ENCODE measurements at regions of chr4 and their contacts with region 1.

Region 1: DNA sequence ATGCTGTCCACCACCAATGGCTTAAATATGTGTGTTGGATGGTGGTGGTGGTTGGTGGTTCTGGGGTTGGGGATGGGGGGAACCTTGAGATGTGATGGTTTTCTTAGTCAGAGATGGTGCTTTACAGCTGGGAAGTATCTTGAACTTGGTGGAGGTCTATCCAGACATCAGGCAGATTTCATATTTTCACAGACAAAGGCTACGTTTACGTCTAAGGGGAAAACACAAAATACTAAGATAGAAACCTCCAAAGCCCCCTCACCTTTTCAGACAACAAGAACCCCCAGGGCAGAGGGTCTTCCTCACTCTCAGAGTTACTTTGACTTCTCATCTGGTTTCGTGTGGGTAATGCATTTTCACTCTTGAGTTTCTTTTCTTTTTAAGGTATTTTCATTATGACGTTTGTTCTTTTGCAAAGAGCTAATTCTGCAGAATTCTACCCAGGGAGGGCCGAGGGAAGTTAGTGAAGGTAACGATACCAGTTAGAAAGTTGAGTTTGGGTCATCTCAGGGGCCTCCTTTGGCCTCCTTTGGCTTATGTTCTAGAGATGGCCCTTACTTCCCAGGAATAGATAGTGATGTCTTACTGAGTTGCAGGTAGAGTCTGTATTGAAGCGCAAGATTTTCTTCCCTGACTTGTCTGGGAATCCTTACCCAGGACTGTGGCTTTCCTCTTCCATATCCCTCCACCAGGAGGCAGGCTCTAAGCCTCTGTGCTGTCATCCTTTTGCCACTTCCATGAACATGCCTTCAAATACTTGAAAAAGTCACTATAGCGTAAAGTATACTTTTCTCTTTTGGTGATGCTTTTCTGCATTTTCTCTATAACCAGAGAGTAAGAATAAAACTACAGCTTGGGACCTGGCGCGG is 31.9 kb downstream of the RHOH start:
- DNase-seq: no peak
- H3K4me3 Mint-ChIP-seq: peak overlapping the region; percentile 64
- H3K27ac Mint-ChIP-seq: peak overlapping the region; percentile 90
- H3K4me1 Mint-ChIP-seq: peaks cover 88% of the 10 kb centered on the region
- H3K27me3 Mint-ChIP-seq: no peaks in the 10 kb centered on the region

Region 2: DNA sequence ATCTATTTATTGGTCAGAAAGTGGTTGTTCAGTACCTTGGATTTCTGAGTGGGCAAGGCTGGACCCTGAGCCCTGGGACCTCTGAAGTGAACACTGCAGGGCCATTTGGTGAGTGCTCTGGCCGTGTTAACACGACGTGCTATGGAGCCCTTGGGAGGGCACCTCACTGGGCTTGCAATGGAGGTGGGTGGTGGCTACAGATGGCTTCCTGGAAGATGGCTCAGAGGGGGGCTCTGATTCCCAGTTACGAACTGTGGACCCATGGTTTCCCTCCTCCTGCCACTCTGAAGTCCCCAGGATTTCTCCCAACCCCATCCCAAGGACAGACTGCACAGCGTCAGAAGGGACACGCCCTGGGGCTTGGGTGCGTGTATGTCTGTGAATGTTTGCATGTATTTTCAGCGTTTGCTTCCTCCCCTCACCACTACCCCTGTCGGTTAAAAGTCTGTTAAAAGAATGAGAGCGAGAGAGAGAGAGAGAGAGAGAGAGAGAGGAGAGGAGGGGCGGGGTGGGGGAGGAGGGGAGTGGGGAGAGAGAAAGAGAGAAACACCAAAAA is 35.6 kb before region 1 on chr4:
- intact Hi-C with region 1: loop called (anchors 5 kb)
- DNase-seq: no peak
- H3K4me3 Mint-ChIP-seq: peak overlapping the region; percentile 84
- H3K27ac Mint-ChIP-seq: peak overlapping the region; percentile 99
- H3K4me1 Mint-ChIP-seq: peaks cover 79% of the 10 kb centered on the region
- H3K27me3 Mint-ChIP-seq: no peaks in the 10 kb centered on the region

Region 3: DNA sequence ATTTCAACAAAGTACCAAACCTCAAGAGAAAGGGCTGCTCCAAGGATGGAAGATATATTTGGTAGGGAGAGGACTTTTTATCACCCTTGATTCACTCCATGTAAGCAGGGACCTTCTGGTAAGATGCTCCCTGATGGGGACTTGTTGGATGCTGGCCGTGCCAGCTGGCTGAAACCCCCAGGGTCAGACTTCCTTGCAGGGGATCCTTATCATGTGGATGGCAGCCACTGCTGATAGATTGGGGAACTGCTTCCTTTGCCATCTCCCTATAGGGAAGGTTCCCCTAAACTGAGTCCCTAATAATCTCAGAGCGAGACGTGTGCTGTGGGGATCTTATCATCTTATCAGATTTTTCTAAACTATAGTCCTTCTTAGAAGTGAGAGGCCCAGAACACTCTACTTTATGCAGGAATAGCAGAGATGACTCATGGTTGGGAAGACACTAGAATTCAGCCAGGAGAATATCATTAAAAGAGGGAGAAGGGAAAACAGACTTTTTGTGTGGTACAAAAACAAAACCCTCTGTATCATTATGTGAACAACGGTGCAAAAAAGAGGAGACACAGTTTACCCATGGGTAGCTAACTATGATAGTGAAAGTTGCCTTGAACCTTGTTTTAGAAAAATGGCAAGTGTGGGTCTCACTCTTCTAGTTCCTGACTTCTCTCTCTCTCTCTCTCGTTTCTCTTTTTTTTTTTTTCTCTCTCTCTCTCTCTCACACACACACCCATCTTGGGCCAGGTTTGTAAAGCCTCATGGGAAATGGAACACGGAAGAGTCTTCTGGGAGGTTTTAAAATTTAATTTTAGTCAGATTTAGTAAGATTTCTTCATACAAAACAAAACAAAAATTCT is 15.8 kb before region 1 on chr4:
- intact Hi-C with region 1: loop called (anchors 1 kb)
- DNase-seq: no peak
- H3K4me3 Mint-ChIP-seq: peak overlapping the region; percentile 70
- H3K27ac Mint-ChIP-seq: peak overlapping the region; percentile 92
- H3K4me1 Mint-ChIP-seq: peaks cover 88% of the 10 kb centered on the region
- H3K27me3 Mint-ChIP-seq: no peaks in the 10 kb centered on the region

Region 4: DNA sequence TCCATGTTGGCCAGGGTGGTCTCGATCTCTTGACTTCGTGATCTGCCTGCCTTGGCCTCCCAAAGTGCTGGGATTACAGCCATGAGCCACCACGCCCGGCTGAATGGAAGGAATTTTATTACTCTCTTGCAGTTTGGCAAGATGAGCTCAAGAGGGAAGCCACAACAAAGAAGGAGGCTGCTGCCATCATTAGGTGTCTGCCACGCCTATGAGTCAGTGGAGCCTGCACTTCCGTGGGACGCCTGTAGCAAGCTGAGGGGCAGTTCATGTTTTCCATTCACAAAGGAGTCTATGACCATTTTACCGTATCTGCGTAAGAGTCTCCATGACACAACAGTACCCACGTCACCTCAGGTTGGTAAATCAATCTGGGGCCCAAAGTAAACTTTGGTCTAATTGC is 55.2 kb after region 1 on chr4:
- intact Hi-C with region 1: loop called (anchors 1 kb)
- DNase-seq: peak; percentile 54
- H3K4me3 Mint-ChIP-seq: peak overlapping the region; percentile 32
- H3K27ac Mint-ChIP-seq: peak overlapping the region; percentile 84
- H3K4me1 Mint-ChIP-seq: peaks cover 56% of the 10 kb centered on the region
- H3K27me3 Mint-ChIP-seq: no peaks in the 10 kb centered on the region

Region 5: DNA sequence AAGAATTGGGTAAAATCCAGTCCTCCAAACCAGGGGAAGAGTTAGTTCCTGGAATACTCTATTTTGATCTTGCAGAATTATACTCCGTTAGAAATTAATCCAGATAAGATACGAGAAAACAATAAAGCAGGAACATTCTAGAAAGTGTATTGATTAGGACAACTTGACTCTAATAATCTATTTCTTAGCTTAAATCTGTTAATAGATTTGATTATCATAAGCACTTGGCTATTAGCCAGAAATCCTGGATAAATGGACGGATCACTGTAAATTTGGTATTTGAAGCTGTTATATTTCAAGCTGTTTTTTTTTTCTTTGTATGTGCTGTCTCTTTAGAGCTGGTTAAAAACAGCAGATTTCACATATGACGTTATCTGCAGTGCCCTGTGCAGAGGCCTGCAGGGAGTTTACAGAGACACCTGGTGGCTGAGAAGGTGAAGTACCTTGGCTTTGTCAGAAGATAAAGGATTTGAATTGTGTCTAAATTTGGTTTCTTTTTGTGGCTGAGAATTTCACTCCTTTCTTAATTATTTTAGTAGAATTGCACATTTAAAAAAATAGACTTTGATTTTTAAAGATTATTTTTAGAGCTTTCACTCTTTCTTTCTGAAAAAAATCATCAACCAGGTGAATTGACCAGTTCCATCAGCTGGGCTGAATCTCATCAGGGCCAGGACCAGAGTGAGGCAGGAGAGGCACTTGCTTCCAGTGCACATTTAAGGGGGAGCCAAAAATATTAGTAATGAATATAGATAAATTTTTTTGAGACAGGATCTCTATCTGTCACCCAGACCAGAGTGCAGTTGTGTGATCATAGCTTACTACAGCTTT is 96.7 kb after region 1 on chr4:
- intact Hi-C with region 1: loop called (anchors 1 kb)
- DNase-seq: peak; percentile 54
- H3K4me3 Mint-ChIP-seq: no peak overlapping the region
- H3K27ac Mint-ChIP-seq: no peak overlapping the region
- H3K4me1 Mint-ChIP-seq: peaks cover 29% of the 10 kb centered on the region
- H3K27me3 Mint-ChIP-seq: no peaks in the 10 kb centered on the region

Region 6: GRCh38 chr4:40719008-40719623 is 490.4 kb after region 1 on chr4:
- intact Hi-C with region 1: loop called (anchors 2 kb)
- DNase-seq: no peak
- H3K4me3 Mint-ChIP-seq: no peak overlapping the region
- H3K27ac Mint-ChIP-seq: peak overlapping the region; percentile 5
- H3K4me1 Mint-ChIP-seq: peaks cover 36% of the 10 kb centered on the region
- H3K27me3 Mint-ChIP-seq: no peaks in the 10 kb centered on the region

Region 7: DNA sequence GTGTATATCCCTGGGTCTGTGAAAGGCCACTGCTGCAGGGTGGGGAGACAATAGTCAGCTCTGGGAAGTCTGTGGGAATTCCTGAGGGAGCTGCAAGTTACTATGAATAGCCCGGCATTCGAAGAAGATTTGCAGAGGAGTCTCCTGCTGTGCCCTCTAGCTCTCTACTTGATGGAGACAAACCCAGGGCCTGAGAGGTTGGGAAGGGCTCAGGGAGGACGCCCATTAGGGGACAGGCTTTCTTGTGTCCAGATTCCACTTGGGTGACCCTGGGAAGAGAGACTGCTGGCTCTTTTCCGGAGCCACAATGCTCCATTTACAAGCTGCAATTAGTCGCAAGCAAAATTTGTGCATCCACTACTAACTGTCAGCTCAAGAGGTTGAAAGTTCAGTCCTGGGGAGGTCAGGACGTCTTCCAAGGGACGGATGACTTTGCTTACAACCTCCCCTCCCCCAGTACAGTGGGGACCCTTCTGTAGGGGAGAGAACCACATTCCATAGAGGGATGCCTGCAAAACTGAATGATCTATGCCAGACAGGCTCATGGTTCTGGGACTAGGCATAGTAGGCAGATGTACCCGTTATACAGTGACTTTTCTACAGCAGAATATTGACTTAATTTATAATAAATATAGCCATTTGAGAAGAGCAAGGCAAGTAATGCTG is 1567.9 kb after region 1 on chr4:
- intact Hi-C with region 1: no loop called
- DNase-seq: no peak
- H3K4me3 Mint-ChIP-seq: no peak overlapping the region
- H3K27ac Mint-ChIP-seq: no peak overlapping the region
- H3K4me1 Mint-ChIP-seq: no peaks in the 10 kb centered on the region
- H3K27me3 Mint-ChIP-seq: no peaks in the 10 kb centered on the region